ENCODE measurements at regions of chr9 and their contacts with region 1.

Region 1: DNA sequence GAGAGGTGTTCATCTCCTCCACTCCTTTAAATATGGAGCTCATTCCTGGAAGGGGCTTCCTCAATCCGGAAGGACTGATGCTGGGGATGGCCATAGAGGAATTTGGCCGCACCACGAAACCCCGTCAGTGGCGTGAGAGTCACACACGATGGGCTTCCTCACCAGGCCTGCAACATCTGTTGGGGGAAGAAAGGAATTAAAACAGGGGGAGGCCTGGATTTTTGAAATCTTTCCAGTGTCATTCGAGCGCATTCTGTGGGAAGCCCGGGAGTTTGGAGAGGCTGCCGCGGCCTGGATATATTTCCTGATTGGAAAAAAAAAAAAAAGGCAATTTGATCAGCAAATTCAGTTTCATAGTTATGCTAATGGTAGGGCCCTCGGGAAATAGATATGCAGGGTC is 76.3 kb upstream of the ORM1 start:
- DNase-seq: no peak
- H3K4me3 ChIP-seq: no peak overlapping the region
- H3K27ac ChIP-seq: no peak overlapping the region
- H3K4me1 ChIP-seq: peaks cover 39% of the 10 kb centered on the region
- H3K27me3 ChIP-seq: no peaks in the 10 kb centered on the region
- CTCF ChIP-seq: no peak

Region 2: DNA sequence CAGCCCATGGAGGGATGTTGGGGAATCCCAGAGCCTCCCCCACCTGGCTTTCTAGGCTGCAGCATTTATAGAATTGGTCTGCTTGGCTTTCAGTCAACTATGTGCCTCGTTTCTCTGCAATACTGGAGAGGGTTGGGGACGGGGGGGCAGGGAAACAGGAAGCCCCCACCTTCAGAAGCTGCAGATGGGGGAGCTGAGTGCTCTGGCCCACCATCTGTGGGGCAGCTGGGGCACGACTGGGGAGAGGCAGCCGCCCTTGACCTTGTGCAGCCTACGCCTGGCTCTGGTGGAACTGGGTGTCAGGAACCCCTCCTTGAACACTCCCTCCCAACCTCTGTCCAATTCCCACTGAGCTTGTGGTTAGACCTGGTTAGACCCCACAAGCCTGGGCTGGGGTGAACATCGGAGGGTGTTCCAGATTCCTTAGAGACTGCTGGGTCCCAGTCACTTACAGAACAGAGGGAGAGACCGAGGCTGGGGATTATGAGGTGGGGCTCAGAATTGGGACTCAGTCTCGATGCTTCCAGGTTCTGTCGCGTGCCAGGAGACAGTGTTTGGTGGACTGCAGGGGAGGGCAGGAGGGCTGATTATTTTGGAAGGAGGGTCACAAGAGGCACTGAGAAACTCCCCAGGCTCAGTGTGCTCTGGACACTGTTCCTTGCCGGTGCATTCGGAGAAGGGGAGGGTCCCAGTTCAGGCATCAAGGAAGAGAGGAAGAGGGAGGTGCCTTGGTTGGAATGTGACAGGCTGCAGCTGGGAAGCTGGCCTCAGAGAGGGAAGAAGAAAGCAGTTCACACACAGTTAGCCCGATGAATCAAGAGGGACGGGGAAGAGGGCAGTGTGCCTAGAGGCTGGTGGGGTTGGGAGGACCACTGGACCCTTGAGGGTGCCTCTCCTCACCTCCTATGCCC is 65.6 kb before region 1 on chr9:
- intact Hi-C with region 1: loop called (anchors 10 kb)
- DNase-seq: peak; percentile 40
- H3K4me3 ChIP-seq: no peak overlapping the region
- H3K27ac ChIP-seq: peak overlapping the region; percentile 82
- H3K4me1 ChIP-seq: peaks cover 88% of the 10 kb centered on the region
- H3K27me3 ChIP-seq: no peaks in the 10 kb centered on the region
- CTCF ChIP-seq: no peak

Region 3: GRCh38 chr9:114409103-114409780 is 162.7 kb after region 1 on chr9:
- intact Hi-C with region 1: no loop called
- DNase-seq: no peak
- H3K4me3 ChIP-seq: no peak overlapping the region
- H3K27ac ChIP-seq: no peak overlapping the region
- H3K4me1 ChIP-seq: no peaks in the 10 kb centered on the region
- H3K27me3 ChIP-seq: peaks cover 22% of the 10 kb centered on the region
- CTCF ChIP-seq: no peak

Region 4: GRCh38 chr9:114434878-114435311 is 188.3 kb after region 1 on chr9:
- intact Hi-C with region 1: no loop called
- DNase-seq: no peak
- H3K4me3 ChIP-seq: no peak overlapping the region
- H3K27ac ChIP-seq: no peak overlapping the region
- H3K4me1 ChIP-seq: no peaks in the 10 kb centered on the region
- H3K27me3 ChIP-seq: peaks cover 61% of the 10 kb centered on the region
- CTCF ChIP-seq: peak; percentile 60

Region 5: DNA sequence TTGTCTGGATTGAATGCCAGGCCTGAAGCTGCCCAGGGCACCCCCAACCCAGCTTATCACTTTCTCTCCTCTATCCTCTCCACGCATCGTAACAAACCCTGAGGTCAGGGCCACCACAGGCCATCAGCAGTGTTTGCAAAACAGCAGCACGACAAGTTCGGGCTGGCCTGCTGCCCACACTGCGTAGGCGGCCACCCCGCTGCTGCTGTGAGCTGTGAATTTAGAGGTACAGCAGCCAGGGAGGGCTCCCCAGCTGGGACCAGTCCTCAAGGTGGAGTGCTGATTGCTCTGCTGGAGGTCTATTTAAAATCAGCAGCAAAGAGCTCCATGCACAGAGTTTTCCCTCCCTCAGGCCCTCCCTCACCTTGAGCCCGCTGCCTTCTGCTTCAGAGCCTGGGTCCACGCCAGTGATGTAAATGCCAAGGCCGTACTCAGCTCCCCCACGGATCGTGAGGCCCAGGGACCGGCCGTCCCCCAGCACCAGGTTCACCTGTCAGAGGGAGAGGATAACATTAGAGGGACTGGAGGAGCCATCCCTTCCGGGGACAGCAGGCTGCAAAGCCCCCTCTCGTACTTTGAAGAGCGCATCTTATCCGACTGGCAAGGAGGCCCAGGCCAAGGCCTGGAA is 219.5 kb after region 1 on chr9:
- intact Hi-C with region 1: no loop called
- DNase-seq: no peak
- H3K4me3 ChIP-seq: no peak overlapping the region
- H3K27ac ChIP-seq: no peak overlapping the region
- H3K4me1 ChIP-seq: no peaks in the 10 kb centered on the region
- H3K27me3 ChIP-seq: peaks cover 10% of the 10 kb centered on the region
- CTCF ChIP-seq: no peak

Measured in left ventricle myocardium inferior (tissue), 1 donor.